ENCODE measurements at regions of chr1 and their contacts with region 1.

Region 1: DNA sequence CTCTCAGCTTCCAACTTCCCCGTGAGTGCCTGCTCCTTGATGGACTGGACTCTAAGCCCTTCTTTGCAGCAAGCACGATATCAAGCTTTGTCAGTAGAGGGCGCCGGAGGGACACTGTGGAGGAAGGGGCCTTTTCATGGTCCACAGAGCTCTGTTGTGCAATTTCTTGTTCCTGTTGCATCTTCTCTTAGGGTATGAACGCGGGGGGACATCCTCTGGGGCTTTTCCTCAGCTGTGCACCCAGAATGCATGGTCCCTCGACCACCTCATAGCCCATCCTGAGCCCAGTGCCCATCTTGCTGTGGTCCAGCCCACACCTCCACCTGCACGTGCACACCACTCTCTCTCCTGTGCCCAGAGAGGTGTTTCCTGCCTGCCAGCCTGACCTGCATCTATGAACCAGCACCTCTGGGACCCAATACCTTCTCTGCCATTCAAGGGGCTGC is 556.8 kb downstream of the PTPRU start:
- DNase-seq: peak; percentile 70 to 82 (median 76)
- ATAC-seq: peak in 3 of 4 donors; percentile 74 to 83 (median 82)
- H3K4me3 ChIP-seq: no peak overlapping the region
- H3K27ac ChIP-seq: no peak overlapping the region
- H3K4me1 ChIP-seq: no peaks in the 10 kb centered on the region
- H3K27me3 ChIP-seq: peaks cover 0 to 2% (median 0%) of the 10 kb centered on the region in 9 donors
- CTCF ChIP-seq: peak; percentile 68 to 88 (median 78)
- POLR2A ChIP-seq: no peak

Region 2: GRCh38 chr1:29230553-29231378 is 562.4 kb before region 1 on chr1 and contains the start of gene MECR:
- intact Hi-C with region 1: loop called in 3 of 10 experiments (anchors 5 to 10 kb)
- DNase-seq: peak; percentile 92 to 97 (median 95)
- ATAC-seq: peak; percentile 93 to 99 (median 98)
- H3K4me3 ChIP-seq: peak within 1 kb of the TSS; percentile 44 to 93 (median 73)
- H3K27ac ChIP-seq: peak within 1 kb of the TSS in 11 of 12 donors; percentile 35 to 74 (median 66)
- H3K4me1 ChIP-seq: peaks cover 0 to 20% (median 13%) of the 10 kb centered on the region in 12 donors
- H3K27me3 ChIP-seq: peaks cover 0 to 3% (median 0%) of the 10 kb centered on the region in 9 donors
- CTCF ChIP-seq: peak in 6 of 12 donors; percentile 11 to 39 (median 26)
- POLR2A ChIP-seq: peak in 1 of 2 donors; percentile 55
- total RNA-seq, gene MECR: 19.6 to 37.4 (median 33.1) TPM

Region 3: DNA sequence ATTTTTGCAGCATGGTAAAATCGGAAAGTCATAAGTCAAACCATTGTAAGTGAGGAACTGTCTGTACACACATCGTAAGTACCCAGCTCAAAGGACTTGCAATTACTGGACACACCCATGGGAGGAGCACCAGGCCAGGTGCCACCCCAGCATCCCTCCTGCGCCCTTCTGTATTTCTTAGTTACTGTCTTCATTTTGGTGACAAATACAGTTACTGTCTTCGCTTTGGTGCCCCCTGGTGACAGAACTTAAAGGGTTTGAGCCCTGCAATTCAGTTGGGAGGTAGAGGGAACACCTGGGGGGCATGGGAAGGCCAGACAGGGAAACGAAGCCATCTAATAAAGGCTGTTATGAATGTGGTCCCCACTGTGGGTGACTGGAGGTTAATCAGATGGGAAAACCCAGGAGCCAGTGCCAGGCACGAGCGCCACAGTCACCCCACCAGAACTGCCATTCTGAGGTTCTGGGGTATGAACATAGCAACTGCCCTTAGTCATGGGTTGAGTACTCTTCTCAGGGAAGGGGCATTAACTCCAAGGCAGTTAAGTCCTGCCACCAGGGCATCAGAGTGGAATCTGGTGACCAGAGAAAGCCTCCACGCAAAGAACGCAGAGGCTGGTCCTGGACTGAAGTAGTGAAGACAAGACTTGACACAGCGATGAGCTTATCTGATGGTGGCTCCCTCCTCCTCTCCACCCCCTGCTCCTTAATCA is 56.1 kb after region 1 on chr1:
- intact Hi-C with region 1: loop called in 1 of 10 experiments (anchors 5 kb)
- DNase-seq: no peak
- ATAC-seq: no peak
- H3K4me3 ChIP-seq: no peak overlapping the region
- H3K27ac ChIP-seq: no peak overlapping the region
- H3K4me1 ChIP-seq: peaks cover 0 to 7% (median 0%) of the 10 kb centered on the region in 12 donors
- H3K27me3 ChIP-seq: peaks cover 0 to 52% (median 8%) of the 10 kb centered on the region in 9 donors
- CTCF ChIP-seq: peak; percentile 13 to 52 (median 37)
- POLR2A ChIP-seq: no peak

Region 4: DNA sequence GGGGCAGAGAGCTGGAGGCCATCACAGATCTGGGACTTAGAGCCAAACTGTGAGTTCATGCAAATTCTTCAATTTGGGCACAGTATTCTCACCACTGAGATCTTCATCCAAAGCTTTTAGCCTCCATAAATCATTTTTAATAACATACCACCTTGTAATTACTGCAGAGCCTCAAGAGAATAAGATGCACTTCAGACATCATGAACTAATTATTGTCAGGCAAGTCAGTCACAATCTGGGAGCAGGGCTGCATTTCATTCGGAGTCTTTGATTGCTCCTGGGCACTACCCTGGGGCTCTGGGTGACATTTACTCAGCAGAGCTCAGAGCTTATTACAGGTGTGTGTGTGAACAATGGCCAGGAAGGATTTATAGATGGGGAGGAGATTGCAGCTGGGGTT is 66.9 kb after region 1 on chr1:
- intact Hi-C with region 1: no loop called
- DNase-seq: no peak
- ATAC-seq: no peak
- H3K4me3 ChIP-seq: no peak overlapping the region
- H3K27ac ChIP-seq: no peak overlapping the region
- H3K4me1 ChIP-seq: peaks cover 0 to 23% (median 2%) of the 10 kb centered on the region in 12 donors
- H3K27me3 ChIP-seq: peaks cover 0 to 3% (median 0%) of the 10 kb centered on the region in 9 donors
- CTCF ChIP-seq: no peak
- POLR2A ChIP-seq: no peak

Region 5: DNA sequence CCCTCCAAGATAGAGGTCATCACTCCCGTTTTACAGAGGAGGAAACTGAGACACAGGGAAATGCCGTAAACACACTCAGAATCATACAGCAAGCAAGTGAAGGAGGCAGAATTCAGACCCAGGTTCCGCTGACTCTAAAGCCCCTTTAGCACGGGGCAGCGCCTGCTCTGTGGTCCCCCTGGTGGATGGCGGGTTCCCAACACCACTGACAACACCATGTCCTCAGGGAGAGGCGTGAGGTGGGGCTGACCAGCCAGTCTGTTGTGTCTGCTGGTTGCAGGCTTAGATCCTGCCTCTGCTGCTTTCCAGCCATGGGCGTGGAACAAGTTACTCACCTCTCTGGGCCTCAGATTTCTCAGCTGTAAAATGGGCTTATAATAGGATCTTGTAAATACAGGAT is 313.0 kb after region 1 on chr1:
- intact Hi-C with region 1: loop called in 7 of 10 experiments (anchors 5 to 10 kb)
- DNase-seq: peak in 1 of 5 donors; percentile 28
- ATAC-seq: peak in 3 of 4 donors; percentile 35 to 70 (median 65)
- H3K4me3 ChIP-seq: no peak overlapping the region
- H3K27ac ChIP-seq: no peak overlapping the region
- H3K4me1 ChIP-seq: no peaks in the 10 kb centered on the region
- H3K27me3 ChIP-seq: peaks cover 0 to 67% (median 11%) of the 10 kb centered on the region in 9 donors
- CTCF ChIP-seq: peak; percentile 19 to 65 (median 35)
- POLR2A ChIP-seq: no peak

Region 6: GRCh38 chr1:30379684-30380624 is 586.8 kb after region 1 on chr1:
- intact Hi-C with region 1: loop called in 8 of 10 experiments (anchors 5 to 10 kb)
- DNase-seq: peak in 3 of 5 donors; percentile 43 to 47 (median 43)
- ATAC-seq: peak; percentile 32 to 82 (median 76)
- H3K4me3 ChIP-seq: no peak overlapping the region
- H3K27ac ChIP-seq: no peak overlapping the region
- H3K4me1 ChIP-seq: peaks cover 0 to 6% (median 0%) of the 10 kb centered on the region in 12 donors
- H3K27me3 ChIP-seq: peaks cover 0 to 30% (median 4%) of the 10 kb centered on the region in 9 donors
- CTCF ChIP-seq: peak; percentile 72 to 94 (median 86)
- POLR2A ChIP-seq: no peak

Region 7: GRCh38 chr1:30718636-30719405 is 925.7 kb after region 1 on chr1:
- intact Hi-C with region 1: loop called in 1 of 10 experiments (anchors 10 kb)
- DNase-seq: peak in 4 of 5 donors; percentile 80 to 98 (median 86)
- ATAC-seq: peak; percentile 73 to 88 (median 86)
- H3K4me3 ChIP-seq: peak overlapping the region; percentile 24 to 71 (median 56)
- H3K27ac ChIP-seq: peak overlapping the region; percentile 80 to 100 (median 95)
- H3K4me1 ChIP-seq: peaks cover 0 to 15% (median 8%) of the 10 kb centered on the region in 12 donors
- H3K27me3 ChIP-seq: no peaks in the 10 kb centered on the region
- CTCF ChIP-seq: peak; percentile 95 to 99 (median 98)
- POLR2A ChIP-seq: peak in 1 of 2 donors; percentile 73

Measured in heart left ventricle (tissue), 16 donors.